ENCODE measurements at regions of chr5 and their contacts with region 1.

Region 1: GRCh38 chr5:36944607-36945225 is 68.1 kb downstream of the NIPBL start:
- DNase-seq: peak in 2 of 9 experiments; percentile 65 to 75
- ATAC-seq: no peak
- H3K4me3 ChIP-seq: no peak overlapping the region
- H3K4me3 Mint-ChIP-seq: no peak overlapping the region
- H3K27ac ChIP-seq: no peak overlapping the region
- H3K27ac Mint-ChIP-seq: no peak overlapping the region
- H3K4me1 ChIP-seq: peaks cover 6% of the 10 kb centered on the region
- H3K4me1 Mint-ChIP-seq: peaks cover 65% of the 10 kb centered on the region
- H3K27me3 ChIP-seq: no peaks in the 10 kb centered on the region
- H3K27me3 Mint-ChIP-seq: no peaks in the 10 kb centered on the region
- CTCF ChIP-seq: peak; percentile 68

Region 2: GRCh38 chr5:36739751-36740221 is 204.9 kb before region 1 on chr5:
- CTCF ChIA-PET with region 1: interaction called, 3 read pairs
- POLR2A ChIA-PET with region 1: no interaction called
- intact Hi-C with region 1: loop called (anchors 1 to 2 kb)
- DNase-seq: peak; percentile 31 to 76 (median 69)
- ATAC-seq: peak; percentile 97
- H3K4me3 ChIP-seq: no peak overlapping the region
- H3K4me3 Mint-ChIP-seq: no peak overlapping the region
- H3K27ac ChIP-seq: no peak overlapping the region
- H3K27ac Mint-ChIP-seq: no peak overlapping the region
- H3K4me1 ChIP-seq: peaks cover 6% of the 10 kb centered on the region
- H3K4me1 Mint-ChIP-seq: peaks cover 11% of the 10 kb centered on the region
- H3K27me3 ChIP-seq: no peaks in the 10 kb centered on the region
- H3K27me3 Mint-ChIP-seq: peaks cover 39% of the 10 kb centered on the region
- CTCF ChIP-seq: peak; percentile 76

Region 3: GRCh38 chr5:36928947-36929346 is 15.8 kb before region 1 on chr5:
- CTCF ChIA-PET with region 1: no interaction called
- POLR2A ChIA-PET with region 1: interaction called, 3 read pairs
- intact Hi-C with region 1: loop called in 1 of 2 experiments (anchors 2 kb)
- DNase-seq: peak in 2 of 9 experiments; percentile 6 to 18
- ATAC-seq: no peak
- H3K4me3 ChIP-seq: no peak overlapping the region
- H3K4me3 Mint-ChIP-seq: no peak overlapping the region
- H3K27ac ChIP-seq: no peak overlapping the region
- H3K27ac Mint-ChIP-seq: no peak overlapping the region
- H3K4me1 ChIP-seq: peaks cover 18% of the 10 kb centered on the region
- H3K4me1 Mint-ChIP-seq: peaks cover 73% of the 10 kb centered on the region
- H3K27me3 ChIP-seq: no peaks in the 10 kb centered on the region
- H3K27me3 Mint-ChIP-seq: no peaks in the 10 kb centered on the region
- CTCF ChIP-seq: no peak

Region 4: GRCh38 chr5:37005946-37006540 is 61.3 kb after region 1 on chr5:
- CTCF ChIA-PET with region 1: no interaction called
- POLR2A ChIA-PET with region 1: no interaction called
- intact Hi-C with region 1: loop called in 1 of 2 experiments (anchors 10 kb)
- DNase-seq: peak in 2 of 9 experiments; percentile 16 to 36
- ATAC-seq: peak; percentile 51
- H3K4me3 ChIP-seq: no peak overlapping the region
- H3K4me3 Mint-ChIP-seq: no peak overlapping the region
- H3K27ac ChIP-seq: no peak overlapping the region
- H3K27ac Mint-ChIP-seq: no peak overlapping the region
- H3K4me1 ChIP-seq: no peaks in the 10 kb centered on the region
- H3K4me1 Mint-ChIP-seq: no peaks in the 10 kb centered on the region
- H3K27me3 ChIP-seq: no peaks in the 10 kb centered on the region
- H3K27me3 Mint-ChIP-seq: no peaks in the 10 kb centered on the region
- CTCF ChIP-seq: peak; percentile 62

Measured in CD8-positive, alpha-beta T cell (primary cell).